Left lung (tissue), 14 donors: ENCODE measurements at regions of chr20 and their contacts with region 1.

Region 1: GRCh38 chr20:8722276-8722928 is 346.5 kb upstream of the PLCB4 start:
- DNase-seq: peak in 2 of 4 donors; percentile 52 to 72
- ATAC-seq: peak; percentile 91
- H3K4me3 ChIP-seq: no peak overlapping the region
- H3K27ac ChIP-seq: no peak overlapping the region
- H3K4me1 ChIP-seq: peaks cover 0 to 4% of the 10 kb centered on the region in 2 donors
- H3K27me3 ChIP-seq: no peaks in the 10 kb centered on the region
- CTCF ChIP-seq: peak; percentile 72 to 79

Region 2: GRCh38 chr20:8043687-8044282 is 678.6 kb before region 1 on chr20:
- intact Hi-C with region 1: loop called in 1 of 2 experiments (anchors 5 kb)
- DNase-seq: peak in 2 of 4 donors; percentile 37 to 65
- ATAC-seq: peak; percentile 86
- H3K4me3 ChIP-seq: no peak overlapping the region
- H3K27ac ChIP-seq: no peak overlapping the region
- H3K4me1 ChIP-seq: peaks cover 0 to 2% of the 10 kb centered on the region in 2 donors
- H3K27me3 ChIP-seq: no peaks in the 10 kb centered on the region
- CTCF ChIP-seq: peak; percentile 64 to 73

Region 3: DNA sequence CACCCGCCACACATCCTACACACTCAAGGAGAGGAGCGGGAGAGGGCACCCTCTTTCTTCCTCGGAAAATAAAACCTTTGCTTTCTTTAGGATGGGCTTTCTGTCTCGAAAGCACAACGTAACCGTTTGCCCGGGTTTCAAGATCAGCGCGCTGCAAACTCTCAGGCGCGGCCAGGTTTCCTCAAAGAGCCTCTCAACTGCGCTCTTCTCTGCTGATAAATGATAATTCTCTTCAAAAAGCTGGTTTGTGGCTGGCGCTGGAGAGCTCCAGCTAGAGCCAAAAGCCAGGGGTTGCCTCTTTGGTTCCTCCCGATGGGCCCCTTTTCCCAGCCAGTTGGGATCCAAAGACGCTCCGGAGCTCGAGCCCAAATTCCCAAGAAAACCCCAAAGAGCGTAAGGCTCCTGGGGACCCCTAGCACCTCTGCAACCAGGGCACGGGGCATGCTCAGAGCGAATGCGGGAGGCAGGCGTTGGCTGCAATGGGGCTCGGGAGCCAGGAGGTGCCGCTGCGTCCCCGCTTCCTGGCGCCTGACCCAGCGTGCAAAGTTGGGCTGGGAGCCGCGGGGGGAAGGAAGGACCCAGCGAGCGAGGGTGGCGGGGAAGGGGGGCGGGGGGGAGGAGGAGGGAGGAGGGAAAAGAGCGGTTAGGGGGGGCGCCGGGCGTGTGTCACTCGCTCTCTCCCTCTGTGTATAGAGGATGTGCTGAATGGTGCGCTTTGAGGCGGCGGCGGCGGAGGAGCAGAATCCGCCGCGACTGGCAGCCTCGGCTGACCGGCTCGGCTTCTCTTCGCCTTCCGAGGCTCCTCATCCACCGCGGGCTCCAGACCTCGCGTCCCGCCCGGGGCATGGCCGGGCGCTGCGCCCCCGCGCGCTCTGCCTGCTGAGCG is 590.6 kb before region 1 on chr20 and contains the start of gene PLCB1:
- intact Hi-C with region 1: loop called in 1 of 2 experiments (anchors 10 kb)
- DNase-seq: peak; percentile 81 to 94 (median 86)
- ATAC-seq: peak; percentile 99
- H3K4me3 ChIP-seq: peak within 1 kb of the TSS; percentile 60 to 62
- H3K27ac ChIP-seq: peak within 1 kb of the TSS; percentile 44 to 69
- H3K4me1 ChIP-seq: peaks cover 0 to 37% of the 10 kb centered on the region in 2 donors
- H3K27me3 ChIP-seq: peaks cover 14 to 30% of the 10 kb centered on the region in 2 donors
- CTCF ChIP-seq: peak; percentile 78 to 83
- polyA plus RNA-seq, gene PLCB1: 18.5 to 27.7 (median 19.3) TPM